ENCODE measurements at regions of chr3 and their contacts with region 1.

Region 1: GRCh38 chr3:186209810-186210752 is 101.2 kb upstream of the ETV5 start:
- DNase-seq: peak in 1 of 2 experiments; percentile 58
- H3K4me3 ChIP-seq: no peak overlapping the region
- H3K27ac ChIP-seq: no peak overlapping the region
- H3K4me1 ChIP-seq: peaks cover 4 to 16% (median 10%) of the 10 kb centered on the region in 4 experiments; a peak in 6 of 7 replicates
- H3K27me3 ChIP-seq: no peaks in the 10 kb centered on the region
- CTCF ChIP-seq: no peak
- EP300 ChIP-seq: no peak
- POLR2A ChIP-seq: no peak
- RAD21 ChIP-seq: no peak

Region 2: GRCh38 chr3:185733980-185734724 is 475.9 kb before region 1 on chr3:
- CTCF ChIA-PET with region 1: no interaction called
- POLR2A ChIA-PET with region 1: no interaction called
- DNase-seq: no peak
- H3K4me3 ChIP-seq: no peak overlapping the region
- H3K27ac ChIP-seq: no peak overlapping the region
- H3K4me1 ChIP-seq: peaks cover 0 to 15% (median 4%) of the 10 kb centered on the region in 4 experiments; a peak in 5 of 7 replicates
- H3K27me3 ChIP-seq: no peaks in the 10 kb centered on the region
- CTCF ChIP-seq: peak; percentile 8 to 75 (median 71)
- EP300 ChIP-seq: no peak
- POLR2A ChIP-seq: no peak
- RAD21 ChIP-seq: peak; percentile 91 to 93

Region 3: GRCh38 chr3:186002884-186003472 is 207.1 kb before region 1 on chr3:
- CTCF ChIA-PET with region 1: interaction called, 12 read pairs
- POLR2A ChIA-PET with region 1: no interaction called
- DNase-seq: peak; percentile 10 to 53
- H3K4me3 ChIP-seq: no peak overlapping the region
- H3K27ac ChIP-seq: no peak overlapping the region
- H3K4me1 ChIP-seq: no peaks in the 10 kb centered on the region
- H3K27me3 ChIP-seq: peaks cover 0 to 2% (median 0%) of the 10 kb centered on the region in 4 experiments; a peak in 1 of 7 replicates
- CTCF ChIP-seq: peak; percentile 53 to 71 (median 64)
- EP300 ChIP-seq: no peak
- POLR2A ChIP-seq: no peak
- RAD21 ChIP-seq: peak; percentile 70 to 73

Region 4: DNA sequence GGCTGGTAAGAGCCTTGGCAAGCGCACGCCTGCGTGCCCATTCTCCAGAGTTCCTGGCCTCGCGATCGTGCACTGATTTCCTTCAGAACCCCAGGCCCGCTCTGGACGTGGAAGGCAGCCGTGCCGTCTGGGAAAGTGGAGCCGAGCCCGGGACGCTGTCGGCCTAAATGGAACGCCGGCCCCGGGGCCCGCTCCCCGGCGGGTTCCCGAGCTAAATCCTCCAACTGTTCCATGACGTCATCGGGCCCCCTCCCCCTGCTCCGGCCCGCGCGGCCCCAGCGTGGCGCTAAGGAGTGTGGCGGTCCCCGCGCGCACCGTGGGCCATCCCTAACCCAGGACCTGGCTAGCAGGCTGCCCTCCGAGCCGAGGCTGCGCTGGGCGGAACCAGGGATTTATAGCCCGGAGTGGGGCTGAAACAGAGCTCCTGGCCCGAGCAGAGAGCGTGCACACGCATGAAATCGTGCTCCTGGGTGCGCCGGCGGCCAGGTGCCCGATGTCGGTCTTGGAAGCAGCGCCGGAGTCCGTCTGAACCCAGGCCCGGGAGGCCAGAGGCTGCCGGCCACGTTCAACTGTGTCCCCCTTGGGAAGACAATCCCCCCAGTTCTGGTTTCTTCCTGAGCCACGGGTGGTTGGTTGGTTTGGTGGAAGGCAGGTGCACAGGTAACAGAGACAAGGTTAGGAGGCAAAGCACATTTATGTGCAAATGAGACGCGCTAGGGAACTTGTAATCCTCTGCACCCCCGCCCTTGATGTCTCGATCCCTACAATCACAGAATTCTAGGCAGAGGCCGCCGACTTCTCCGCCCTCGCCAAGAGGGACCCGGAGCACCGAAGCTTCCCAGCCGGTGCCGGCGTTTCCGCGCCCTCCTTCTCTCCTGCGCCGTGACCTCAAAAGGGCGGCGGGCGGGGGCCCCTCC is 16.3 kb before region 1 on chr3:
- CTCF ChIA-PET with region 1: interaction called, 24 read pairs
- POLR2A ChIA-PET with region 1: interaction called, 12 read pairs
- DNase-seq: peak; percentile 31 to 80
- H3K4me3 ChIP-seq: peak overlapping the region; percentile 19 to 70 (median 57)
- H3K27ac ChIP-seq: no peak overlapping the region
- H3K4me1 ChIP-seq: peaks cover 3 to 8% (median 4%) of the 10 kb centered on the region in 4 experiments; a peak in 6 of 7 replicates
- H3K27me3 ChIP-seq: peaks cover 36 to 75% (median 61%) of the 10 kb centered on the region in 4 experiments
- CTCF ChIP-seq: no peak
- EP300 ChIP-seq: no peak; a peak in 1 of 3 replicates
- POLR2A ChIP-seq: no peak
- RAD21 ChIP-seq: peak; percentile 3 to 7; a peak in 1 of 4 replicates

Region 5: DNA sequence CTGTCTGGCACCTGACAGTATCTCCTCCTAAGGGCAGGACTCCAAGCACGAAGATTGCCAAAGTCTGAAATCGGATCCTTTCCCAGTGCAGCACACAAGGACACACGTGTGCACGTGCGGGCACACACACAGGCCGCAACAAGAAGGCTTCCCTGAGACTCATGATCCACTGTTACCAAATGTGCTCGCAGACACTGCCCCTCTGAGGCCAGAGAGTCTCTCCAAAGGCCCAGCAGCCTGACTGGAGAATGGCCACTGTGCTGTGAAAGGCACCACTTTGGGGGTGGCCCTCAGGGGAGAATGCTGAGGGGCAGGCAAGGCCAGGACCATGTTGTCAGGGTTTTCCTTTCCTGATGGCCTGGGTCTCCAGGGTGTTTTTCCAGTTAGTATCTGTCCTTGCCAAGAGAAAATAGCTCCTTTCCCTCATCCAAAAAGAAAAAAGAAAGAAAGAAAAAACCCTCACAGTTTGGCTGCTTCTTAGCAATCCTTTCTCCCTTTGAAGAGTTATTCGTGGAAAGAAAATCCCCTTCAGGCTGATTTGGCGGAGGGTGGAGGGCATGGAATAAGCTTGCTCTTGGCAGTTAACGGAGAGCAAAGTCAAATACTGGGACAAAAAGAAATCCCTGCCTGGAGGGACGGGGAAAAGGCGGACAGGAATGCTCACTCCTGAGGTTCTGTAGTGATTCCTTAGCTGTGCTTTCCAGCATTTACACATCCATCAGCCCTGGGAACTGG is 11.0 kb after region 1 on chr3:
- CTCF ChIA-PET with region 1: interaction called, 33 read pairs
- POLR2A ChIA-PET with region 1: interaction called, 5 read pairs
- DNase-seq: no peak
- H3K4me3 ChIP-seq: no peak overlapping the region
- H3K27ac ChIP-seq: no peak overlapping the region
- H3K4me1 ChIP-seq: no peaks in the 10 kb centered on the region
- H3K27me3 ChIP-seq: peaks cover 0 to 2% (median 0%) of the 10 kb centered on the region in 4 experiments; a peak in 1 of 7 replicates
- CTCF ChIP-seq: peak; percentile 9 to 32 (median 29); a peak in 3 of 4 replicates
- EP300 ChIP-seq: no peak
- POLR2A ChIP-seq: no peak
- RAD21 ChIP-seq: peak; percentile 50 to 62